Activated B cell treated with CpG ODN at 0.5 μM for 24 hours (primary cell): ENCODE measurements at regions of chr10 and their contacts with region 1.

Region 1: GRCh38 chr10:17685233-17685840 is 41.4 kb downstream of the STAM start:
- DNase-seq: no peak
- ATAC-seq: peak; percentile 79
- H3K4me3 Mint-ChIP-seq: peak overlapping the region; percentile 12
- H3K27ac Mint-ChIP-seq: peak overlapping the region; percentile 59
- H3K4me1 Mint-ChIP-seq: peaks cover 35% of the 10 kb centered on the region
- H3K27me3 Mint-ChIP-seq: no peaks in the 10 kb centered on the region
- CTCF ChIP-seq: no peak

Region 2: GRCh38 chr10:17617031-17617911 is 68.1 kb before region 1 on chr10 and contains the start of gene HACD1:
- CTCF ChIA-PET with region 1: no interaction called
- POLR2A ChIA-PET with region 1: interaction called, 4 read pairs
- intact Hi-C with region 1: loop called (anchors 5 kb)
- DNase-seq: peak; percentile 37
- ATAC-seq: peak; percentile 74
- H3K4me3 Mint-ChIP-seq: peak within 1 kb of the TSS; percentile 82
- H3K27ac Mint-ChIP-seq: no peak within 1 kb of the TSS
- H3K4me1 Mint-ChIP-seq: peaks cover 9% of the 10 kb centered on the region
- H3K27me3 Mint-ChIP-seq: peaks cover 16% of the 10 kb centered on the region
- CTCF ChIP-seq: no peak
- total RNA-seq, gene HACD1: 1.8 and 2.6 TPM in 2 replicates

Region 3: DNA sequence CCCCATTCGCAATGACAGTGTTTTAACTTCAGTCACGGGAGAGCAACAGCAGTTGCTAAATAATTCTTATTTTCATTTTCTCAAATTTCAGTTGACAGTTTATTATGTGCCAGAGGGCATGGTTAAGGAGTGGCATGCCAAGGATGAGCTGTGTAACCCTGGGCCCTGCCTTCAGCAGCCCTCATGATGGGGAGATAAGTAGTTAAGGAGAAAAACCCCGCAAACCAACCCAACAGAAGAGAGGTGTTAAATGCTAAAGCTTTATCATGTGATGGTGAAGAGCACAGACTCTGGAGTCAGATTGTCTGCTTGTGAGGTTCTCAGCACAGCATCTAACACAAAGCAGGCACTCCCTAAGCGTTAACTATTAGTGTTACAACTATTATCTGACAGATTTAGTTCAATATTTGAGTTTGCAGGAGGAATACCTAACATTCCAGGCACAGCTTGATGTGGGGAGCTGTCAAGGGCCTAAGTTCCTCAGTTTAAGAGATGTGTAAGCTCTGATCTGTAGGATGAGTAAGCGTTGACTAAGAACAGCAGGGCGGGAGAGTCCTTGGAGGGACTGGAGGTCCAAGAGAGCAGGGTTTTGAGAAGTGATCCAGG is 11.8 kb before region 1 on chr10:
- CTCF ChIA-PET with region 1: no interaction called
- POLR2A ChIA-PET with region 1: interaction called, 8 read pairs
- intact Hi-C with region 1: loop called (anchors 1 kb)
- DNase-seq: no peak
- ATAC-seq: no peak
- H3K4me3 Mint-ChIP-seq: no peak overlapping the region
- H3K27ac Mint-ChIP-seq: no peak overlapping the region
- H3K4me1 Mint-ChIP-seq: peaks cover 38% of the 10 kb centered on the region
- H3K27me3 Mint-ChIP-seq: no peaks in the 10 kb centered on the region
- CTCF ChIP-seq: no peak

Region 4: DNA sequence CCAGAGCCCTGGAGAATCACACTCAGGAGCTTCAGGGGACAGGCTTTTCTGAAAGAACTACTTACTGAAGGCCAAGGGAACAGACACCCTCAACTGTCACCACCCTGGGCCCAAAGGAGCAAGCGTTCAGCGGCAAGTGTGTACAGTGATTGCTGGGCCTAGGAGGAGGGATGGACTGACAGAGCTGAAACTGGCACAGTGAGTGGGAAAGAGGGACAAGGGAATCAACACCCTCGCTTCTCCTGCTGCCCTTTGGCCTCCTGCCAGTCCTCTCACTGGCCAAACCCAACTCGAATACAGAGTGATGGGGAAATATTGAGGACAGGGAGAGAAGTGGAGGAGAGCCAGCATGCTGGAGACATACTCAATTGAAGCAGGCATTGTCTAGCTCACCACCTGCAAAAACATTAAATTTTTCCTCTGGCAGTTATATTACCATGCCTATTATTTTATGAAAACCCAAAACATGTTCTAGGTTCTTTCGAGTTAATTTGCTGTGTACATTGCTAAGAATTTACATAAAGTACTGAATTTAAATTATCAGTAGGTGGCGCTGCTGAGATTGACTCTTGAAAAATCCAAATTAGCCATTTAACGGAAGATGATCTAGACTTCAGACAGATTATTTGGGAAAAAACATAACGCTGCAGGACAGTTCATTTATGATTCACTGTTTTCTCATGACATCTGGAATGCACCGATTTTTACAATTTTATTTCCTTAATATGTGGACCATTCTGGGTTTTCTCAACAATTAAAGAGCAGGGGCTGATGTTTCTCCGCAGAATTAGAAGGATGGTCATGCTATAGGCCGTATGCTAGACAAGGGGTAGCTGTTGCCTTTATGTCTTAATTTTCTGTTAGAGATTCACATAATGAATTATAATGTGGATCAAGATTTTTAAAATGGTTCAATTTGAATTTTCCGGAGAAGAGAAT is 52.0 kb after region 1 on chr10:
- CTCF ChIA-PET with region 1: no interaction called
- POLR2A ChIA-PET with region 1: no interaction called
- intact Hi-C with region 1: no loop called
- DNase-seq: no peak
- ATAC-seq: no peak
- H3K4me3 Mint-ChIP-seq: no peak overlapping the region
- H3K27ac Mint-ChIP-seq: no peak overlapping the region
- H3K4me1 Mint-ChIP-seq: no peaks in the 10 kb centered on the region
- H3K27me3 Mint-ChIP-seq: no peaks in the 10 kb centered on the region
- CTCF ChIP-seq: peak; percentile 57